ENCODE measurements at regions of chr15 and their contacts with region 1.

Region 1: GRCh38 chr15:74906446-74907162 is at the start of gene FAM219B:
- DNase-seq: peak; percentile 88
- ATAC-seq: peak; percentile 89
- H3K4me3 Mint-ChIP-seq: peak within 1 kb of the TSS; percentile 92
- H3K27ac Mint-ChIP-seq: peak within 1 kb of the TSS; percentile 92
- H3K4me1 Mint-ChIP-seq: peaks cover 40% of the 10 kb centered on the region
- H3K27me3 Mint-ChIP-seq: no peaks in the 10 kb centered on the region
- total RNA-seq, gene FAM219B: 61.3 to 72.5 TPM

Region 2: GRCh38 chr15:74540761-74541493 is 365.7 kb before region 1 on chr15 and contains the start of gene ARID3B:
- CTCF ChIA-PET with region 1: no interaction called
- POLR2A ChIA-PET with region 1: no interaction called
- DNase-seq: peak; percentile 99
- ATAC-seq: peak; percentile 92
- H3K4me3 Mint-ChIP-seq: peak within 1 kb of the TSS; percentile 98
- H3K27ac Mint-ChIP-seq: peak within 1 kb of the TSS; percentile 99
- H3K4me1 Mint-ChIP-seq: peaks cover 57% of the 10 kb centered on the region
- H3K27me3 Mint-ChIP-seq: no peaks in the 10 kb centered on the region
- total RNA-seq, gene ARID3B: 39.8 to 40.1 TPM

Region 3: DNA sequence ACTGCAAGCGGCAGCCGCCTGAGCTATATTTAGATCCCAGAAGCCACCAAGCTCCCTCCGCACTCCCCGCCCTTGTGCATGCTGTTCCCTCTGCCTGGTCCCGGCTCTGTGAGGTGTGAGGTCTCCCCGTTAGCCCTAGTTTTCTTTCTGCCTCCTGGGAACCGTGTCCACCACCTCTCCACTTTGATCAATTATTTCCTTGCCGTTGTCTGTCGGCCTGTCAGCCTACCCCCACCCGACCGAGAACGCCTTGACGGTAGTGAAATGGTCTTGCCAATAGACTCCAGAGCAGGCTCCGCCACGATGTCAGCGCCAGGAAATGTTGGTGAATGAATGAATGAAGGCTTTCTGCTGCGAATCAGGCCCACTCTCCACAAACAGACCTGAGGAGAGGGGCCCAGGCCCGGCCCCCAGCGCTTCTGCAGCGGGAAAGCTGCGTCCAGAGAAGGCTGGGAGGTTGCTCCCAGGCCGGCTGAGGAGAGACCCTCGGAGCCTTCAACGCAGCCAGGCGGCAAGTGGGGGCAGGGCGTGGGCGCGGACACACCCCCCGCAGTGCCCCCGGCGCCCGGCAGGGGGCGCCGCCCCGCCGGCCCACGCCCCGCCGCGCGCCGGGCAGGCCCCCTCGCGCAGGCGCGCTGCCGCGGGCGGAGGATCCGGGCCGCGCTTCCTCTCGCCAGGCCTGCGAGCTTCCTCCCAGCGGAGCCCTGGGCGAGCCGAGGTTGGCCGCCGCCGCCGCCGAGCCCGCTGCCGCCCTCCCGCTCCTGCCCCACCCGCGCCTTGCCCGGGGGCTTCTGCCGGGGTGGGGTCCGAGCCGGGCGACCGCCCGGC is 125.0 kb before region 1 on chr15 and contains the start of gene CSK:
- CTCF ChIA-PET with region 1: interaction called, 16 read pairs
- POLR2A ChIA-PET with region 1: interaction called, 5 read pairs
- DNase-seq: peak; percentile 82
- ATAC-seq: peak; percentile 59
- H3K4me3 Mint-ChIP-seq: peak within 1 kb of the TSS; percentile 95
- H3K27ac Mint-ChIP-seq: peak within 1 kb of the TSS; percentile 99
- H3K4me1 Mint-ChIP-seq: peaks cover 59% of the 10 kb centered on the region
- H3K27me3 Mint-ChIP-seq: no peaks in the 10 kb centered on the region
- total RNA-seq, gene CSK: 314 to 330 TPM

Region 4: GRCh38 chr15:74835307-74835823 is 71.2 kb before region 1 on chr15:
- CTCF ChIA-PET with region 1: interaction called, 75 read pairs
- POLR2A ChIA-PET with region 1: interaction called, 3 read pairs
- DNase-seq: peak; percentile 54
- ATAC-seq: peak; percentile 45
- H3K4me3 Mint-ChIP-seq: no peak overlapping the region
- H3K27ac Mint-ChIP-seq: no peak overlapping the region
- H3K4me1 Mint-ChIP-seq: no peaks in the 10 kb centered on the region
- H3K27me3 Mint-ChIP-seq: peaks cover 3% of the 10 kb centered on the region

Region 5: GRCh38 chr15:74863239-74864056 is 43.2 kb before region 1 on chr15:
- CTCF ChIA-PET with region 1: interaction called, 82 read pairs
- POLR2A ChIA-PET with region 1: interaction called, 7 read pairs
- DNase-seq: peak; percentile 40
- ATAC-seq: peak; percentile 67
- H3K4me3 Mint-ChIP-seq: no peak overlapping the region
- H3K27ac Mint-ChIP-seq: peak overlapping the region; percentile 76
- H3K4me1 Mint-ChIP-seq: peaks cover 66% of the 10 kb centered on the region
- H3K27me3 Mint-ChIP-seq: no peaks in the 10 kb centered on the region

Region 6: GRCh38 chr15:74884428-74885223 is 22.0 kb before region 1 on chr15:
- CTCF ChIA-PET with region 1: interaction called, 41 read pairs
- POLR2A ChIA-PET with region 1: interaction called, 6 read pairs
- DNase-seq: no peak
- ATAC-seq: no peak
- H3K4me3 Mint-ChIP-seq: no peak overlapping the region
- H3K27ac Mint-ChIP-seq: peak overlapping the region; percentile 30
- H3K4me1 Mint-ChIP-seq: peaks cover 27% of the 10 kb centered on the region
- H3K27me3 Mint-ChIP-seq: peaks cover 4% of the 10 kb centered on the region

Region 7: DNA sequence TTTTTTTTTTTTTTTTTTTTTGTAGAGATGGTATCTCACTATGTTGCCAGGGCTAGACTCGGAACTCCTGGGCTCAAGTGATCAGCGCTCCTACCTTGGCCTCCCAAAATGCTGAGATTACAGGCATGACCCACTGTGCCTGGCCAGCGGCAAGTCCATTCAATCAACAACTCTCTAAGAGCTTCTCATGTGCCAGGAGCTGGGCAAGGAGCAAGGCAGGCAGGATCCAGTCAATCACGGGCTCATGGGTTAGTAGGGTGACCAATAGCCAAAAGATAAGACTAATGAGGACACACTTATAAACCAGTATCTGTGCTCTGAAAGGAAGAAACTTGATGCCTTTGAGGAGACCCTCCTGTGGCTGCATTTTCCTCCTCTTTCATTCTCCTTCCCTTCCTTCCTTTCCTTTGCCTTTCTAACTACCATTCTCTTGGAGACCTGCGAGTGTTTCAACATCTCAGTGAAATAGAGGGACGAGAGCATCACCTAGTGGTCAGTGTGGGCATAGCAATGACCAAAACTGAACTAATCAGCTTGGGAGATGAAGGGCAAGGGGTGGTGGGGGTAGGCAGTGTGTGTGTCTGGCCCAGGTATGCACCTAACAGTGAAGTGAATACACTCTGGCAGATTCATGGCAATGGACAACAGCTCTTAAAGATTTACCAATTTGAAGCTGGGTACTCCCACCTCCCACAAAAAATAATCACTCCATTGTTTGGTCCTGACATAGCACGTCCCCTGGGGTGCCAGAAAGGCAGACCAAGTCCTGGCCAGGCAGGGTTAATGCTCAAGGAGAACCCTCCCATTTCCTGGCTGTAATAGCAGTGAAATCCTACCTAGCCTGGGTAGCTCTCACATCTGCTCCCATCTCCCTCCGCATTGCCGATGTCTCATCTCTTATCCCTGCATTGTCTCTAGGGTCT is 43.7 kb after region 1 on chr15:
- CTCF ChIA-PET with region 1: interaction called, 22 read pairs
- POLR2A ChIA-PET with region 1: no interaction called
- DNase-seq: peak; percentile 85
- ATAC-seq: peak; percentile 88
- H3K4me3 Mint-ChIP-seq: no peak overlapping the region
- H3K27ac Mint-ChIP-seq: no peak overlapping the region
- H3K4me1 Mint-ChIP-seq: peaks cover 11% of the 10 kb centered on the region
- H3K27me3 Mint-ChIP-seq: peaks cover 6% of the 10 kb centered on the region

Region 8: GRCh38 chr15:74967670-74968069 is 61.1 kb after region 1 on chr15:
- CTCF ChIA-PET with region 1: no interaction called
- POLR2A ChIA-PET with region 1: no interaction called
- DNase-seq: no peak
- ATAC-seq: no peak
- H3K4me3 Mint-ChIP-seq: no peak overlapping the region
- H3K27ac Mint-ChIP-seq: no peak overlapping the region
- H3K4me1 Mint-ChIP-seq: no peaks in the 10 kb centered on the region
- H3K27me3 Mint-ChIP-seq: peaks cover 6% of the 10 kb centered on the region

Measured in activated CD8-positive, alpha-beta T cell treated with anti-CD3 and anti-CD28 coated beads, Interleukin-2, amount 10 ng/mL, durations not matched to agents 7 days and 5 days (primary cell).